Activated CD8-positive, alpha-beta memory T cell treated with anti-CD3 and anti-CD28 coated beads, Interleukin-2, amount 10 ng/mL, durations not matched to agents 7 days and 5 days (primary cell): ENCODE measurements at regions of chr15 and their contacts with region 1.

Region 1: GRCh38 chr15:99704444-99704838 is 28.8 kb downstream of the LYSMD4 start:
- DNase-seq: no peak
- ATAC-seq: peak; percentile 72
- H3K4me3 Mint-ChIP-seq: no peak overlapping the region
- H3K27ac Mint-ChIP-seq: no peak overlapping the region
- H3K4me1 Mint-ChIP-seq: peaks cover 38% of the 10 kb centered on the region
- H3K27me3 Mint-ChIP-seq: no peaks in the 10 kb centered on the region

Region 2: GRCh38 chr15:99275525-99276128 is 428.8 kb before region 1 on chr15:
- CTCF ChIA-PET with region 1: interaction called, 74 read pairs
- DNase-seq: no peak
- ATAC-seq: no peak
- H3K4me3 Mint-ChIP-seq: no peak overlapping the region
- H3K27ac Mint-ChIP-seq: no peak overlapping the region
- H3K4me1 Mint-ChIP-seq: peaks cover 21% of the 10 kb centered on the region
- H3K27me3 Mint-ChIP-seq: no peaks in the 10 kb centered on the region

Region 3: GRCh38 chr15:99343881-99344551 is 360.4 kb before region 1 on chr15:
- CTCF ChIA-PET with region 1: interaction called, 13 read pairs
- DNase-seq: no peak
- ATAC-seq: peak; percentile 36
- H3K4me3 Mint-ChIP-seq: no peak overlapping the region
- H3K27ac Mint-ChIP-seq: no peak overlapping the region
- H3K4me1 Mint-ChIP-seq: peaks cover 7% of the 10 kb centered on the region
- H3K27me3 Mint-ChIP-seq: no peaks in the 10 kb centered on the region

Region 4: DNA sequence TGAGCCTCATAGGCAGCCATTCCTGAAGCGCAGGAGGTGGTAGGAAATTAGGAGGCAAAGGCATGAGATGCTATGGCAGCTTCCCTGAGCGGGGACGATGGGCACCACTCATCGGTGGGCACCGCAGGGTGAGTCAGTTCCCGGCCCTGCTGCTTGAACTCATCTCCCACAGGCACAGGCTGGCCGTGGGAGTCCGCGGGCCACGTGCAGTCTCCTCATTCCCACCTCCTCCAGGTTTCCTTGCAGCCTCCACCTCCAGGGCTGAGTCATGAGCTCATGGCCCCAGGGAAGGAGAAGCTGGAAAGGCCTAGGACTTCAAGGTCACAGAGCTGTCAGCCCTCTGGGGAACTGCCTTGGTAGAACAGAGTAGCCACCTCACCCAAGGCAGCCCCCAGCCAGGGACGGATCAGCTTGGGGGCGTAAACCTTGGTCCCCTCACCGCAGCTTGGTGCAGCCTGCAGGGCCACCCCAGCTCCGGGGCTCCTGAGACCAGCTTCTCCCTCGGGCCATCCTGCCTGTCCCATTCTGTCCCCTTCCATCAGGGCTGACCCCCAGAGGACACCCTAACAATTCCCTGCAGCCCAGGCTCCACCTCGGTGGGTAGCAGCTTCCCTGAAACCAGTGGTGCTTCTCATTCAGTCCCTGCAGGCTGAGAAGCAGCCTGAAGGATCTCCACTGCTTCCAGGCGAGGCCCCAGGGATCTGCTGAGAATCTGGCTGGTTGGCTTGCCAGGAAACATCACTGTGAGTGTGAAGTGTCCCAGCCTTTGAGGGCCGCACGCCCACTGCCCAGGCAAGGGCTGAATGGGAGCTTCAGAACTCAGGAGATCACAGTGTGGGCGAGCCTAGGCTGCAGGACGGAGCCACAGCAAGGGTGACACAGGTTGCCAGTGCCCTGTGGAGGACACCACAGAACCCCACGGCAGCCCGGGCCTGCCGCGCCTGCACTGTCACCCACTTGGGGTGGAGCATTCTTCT is 289.4 kb before region 1 on chr15:
- CTCF ChIA-PET with region 1: no interaction called
- DNase-seq: peak; percentile 40
- ATAC-seq: no peak
- H3K4me3 Mint-ChIP-seq: no peak overlapping the region
- H3K27ac Mint-ChIP-seq: no peak overlapping the region
- H3K4me1 Mint-ChIP-seq: no peaks in the 10 kb centered on the region
- H3K27me3 Mint-ChIP-seq: peaks cover 9% of the 10 kb centered on the region

Region 5: DNA sequence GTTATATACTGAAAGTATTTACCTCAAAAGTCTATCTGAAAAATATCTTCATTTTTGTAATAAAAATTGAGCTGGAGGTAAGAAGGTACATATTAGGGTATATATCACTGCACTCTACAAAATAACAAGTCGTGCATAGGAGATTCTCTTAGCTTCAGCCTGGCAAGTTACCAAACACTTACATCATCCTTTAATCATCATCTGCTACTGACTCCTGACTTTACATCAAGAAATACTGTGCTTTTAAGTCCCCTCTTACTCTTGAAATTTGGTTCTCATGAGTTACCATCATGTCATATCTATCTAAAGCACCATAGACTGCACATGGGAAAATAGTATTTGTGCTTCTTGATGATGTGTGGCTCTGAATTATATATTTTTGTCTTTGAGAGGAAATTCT is 22.0 kb before region 1 on chr15:
- CTCF ChIA-PET with region 1: interaction called, 19 read pairs
- DNase-seq: no peak
- ATAC-seq: no peak
- H3K4me3 Mint-ChIP-seq: no peak overlapping the region
- H3K27ac Mint-ChIP-seq: no peak overlapping the region
- H3K4me1 Mint-ChIP-seq: peaks cover 17% of the 10 kb centered on the region
- H3K27me3 Mint-ChIP-seq: no peaks in the 10 kb centered on the region

Region 6: DNA sequence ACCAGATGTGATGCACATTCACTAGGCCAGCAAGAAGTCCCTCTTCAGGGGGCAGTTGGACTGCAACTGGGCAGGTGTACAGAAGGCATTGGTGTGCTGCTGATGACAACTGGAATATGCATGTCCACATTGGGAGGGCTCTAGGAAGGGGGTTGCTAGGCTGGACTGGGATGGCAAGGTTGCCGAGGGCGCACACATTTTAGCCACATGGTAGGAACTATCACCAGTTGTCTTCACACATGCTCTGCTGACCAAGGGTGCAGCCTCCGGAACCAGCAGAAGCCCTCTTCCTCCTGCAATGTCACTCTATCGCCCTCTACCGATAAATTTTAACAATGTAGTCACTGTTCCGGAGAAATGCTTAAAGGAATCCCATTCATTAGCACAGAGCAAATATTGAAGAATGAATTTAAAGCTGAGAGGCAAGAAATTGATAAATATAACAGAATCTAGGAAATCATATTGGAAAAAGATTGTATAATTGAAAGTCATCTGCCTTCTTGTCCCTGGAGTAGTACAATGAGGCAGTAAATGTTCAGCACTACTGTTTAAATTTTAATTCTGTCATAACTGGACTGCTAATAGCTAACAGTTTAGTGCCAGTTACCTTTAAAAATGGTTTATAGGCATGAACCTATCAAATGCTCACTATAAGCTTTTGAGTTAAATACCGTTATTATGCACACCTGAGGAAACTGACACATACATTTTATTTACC is 51.4 kb after region 1 on chr15:
- CTCF ChIA-PET with region 1: interaction called, 19 read pairs
- DNase-seq: peak; percentile 50
- ATAC-seq: peak; percentile 89
- H3K4me3 Mint-ChIP-seq: no peak overlapping the region
- H3K27ac Mint-ChIP-seq: no peak overlapping the region
- H3K4me1 Mint-ChIP-seq: peaks cover 6% of the 10 kb centered on the region
- H3K27me3 Mint-ChIP-seq: peaks cover 8% of the 10 kb centered on the region